ENCODE measurements at regions of chr1 and their contacts with region 1.

Region 1: DNA sequence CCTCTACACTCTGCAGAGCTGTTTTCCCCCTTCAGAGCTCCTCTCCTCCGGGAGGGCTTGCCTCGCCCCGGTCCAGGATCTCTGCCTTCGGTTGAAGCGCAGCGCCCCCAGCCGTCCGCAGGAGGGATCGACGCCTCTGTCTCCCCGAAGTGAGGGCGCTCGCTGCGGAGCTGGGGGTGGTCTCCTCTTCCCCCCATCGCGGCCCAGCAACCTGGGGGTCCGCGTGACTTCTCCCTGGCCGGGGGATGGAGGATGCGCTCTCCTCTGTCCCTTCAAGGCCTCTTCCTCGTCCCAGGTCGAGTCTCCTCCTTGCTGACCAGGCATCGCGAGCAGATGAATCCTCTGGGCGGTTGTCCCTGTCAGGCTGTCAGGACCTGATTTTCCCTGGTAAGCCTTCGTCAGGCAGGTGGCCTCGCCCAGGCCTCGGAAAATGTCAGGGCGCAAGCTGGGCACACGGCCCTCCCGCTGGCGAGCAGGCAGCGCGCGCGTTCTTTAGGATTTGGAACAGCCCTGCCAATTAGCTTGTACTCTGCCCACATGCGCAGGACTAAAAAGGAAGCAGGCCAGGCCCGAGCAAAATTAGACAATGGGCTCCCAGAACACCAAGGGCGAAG is 90.5 kb downstream of the EDEM3 start:
- DNase-seq: peak; percentile 92
- ATAC-seq: peak; percentile 96
- H3K4me3 Mint-ChIP-seq: peak overlapping the region; percentile 67
- H3K27ac Mint-ChIP-seq: no peak overlapping the region
- H3K4me1 Mint-ChIP-seq: peaks cover 34% of the 10 kb centered on the region
- H3K27me3 Mint-ChIP-seq: peaks cover 8% of the 10 kb centered on the region
- CTCF ChIP-seq: peak; percentile 89

Region 2: DNA sequence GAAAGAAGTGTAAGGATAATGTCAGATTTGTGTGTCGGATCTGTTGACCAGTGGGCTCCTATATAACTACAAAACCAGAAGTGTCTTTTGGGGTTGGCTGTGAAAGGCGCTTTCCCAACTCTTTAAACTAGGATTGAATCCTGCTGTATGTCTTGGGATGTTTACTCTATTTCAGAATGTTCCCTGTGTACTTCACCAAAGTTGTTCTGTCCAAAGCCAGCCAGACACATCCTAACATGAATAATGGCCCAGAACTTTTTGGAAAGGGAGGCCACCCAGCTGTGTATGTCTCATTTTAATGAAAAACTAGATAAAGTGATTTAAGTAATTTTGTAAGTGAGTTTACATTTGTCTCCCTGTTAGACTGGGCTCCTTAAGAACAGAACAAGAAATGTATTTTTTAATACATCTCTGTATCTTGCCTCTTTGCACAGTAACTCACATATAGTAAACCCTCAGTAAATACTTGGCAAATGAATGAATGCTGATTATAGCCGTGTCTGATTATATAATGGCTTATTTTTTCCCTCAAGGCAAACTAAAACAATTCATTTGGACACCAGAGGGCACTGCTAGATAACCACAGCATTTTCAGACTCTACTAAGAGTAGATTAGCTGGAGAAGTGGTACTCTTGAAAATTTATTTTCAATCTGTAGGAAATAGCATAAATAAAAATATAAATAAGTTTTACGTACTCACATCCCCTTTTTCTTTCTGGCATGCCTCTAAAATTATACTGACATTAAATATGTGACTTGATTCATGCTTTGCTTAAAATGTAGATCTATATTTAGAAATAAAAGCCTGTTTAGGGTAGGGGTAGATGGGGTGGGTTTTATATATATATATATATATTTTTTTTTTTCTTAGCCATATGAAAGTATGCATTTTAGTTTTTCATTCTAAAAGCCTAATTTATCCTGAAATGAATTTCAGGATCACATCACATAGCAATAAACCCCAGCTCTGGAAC is 588.8 kb before region 1 on chr1:
- CTCF ChIA-PET with region 1: interaction called, 16 read pairs
- POLR2A ChIA-PET with region 1: no interaction called
- DNase-seq: no peak
- ATAC-seq: 0 out of 2 replicates have a peak, but pooled peaks have one; percentile 34
- H3K4me3 Mint-ChIP-seq: no peak overlapping the region
- H3K27ac Mint-ChIP-seq: no peak overlapping the region
- H3K4me1 Mint-ChIP-seq: no peaks in the 10 kb centered on the region
- H3K27me3 Mint-ChIP-seq: no peaks in the 10 kb centered on the region
- CTCF ChIP-seq: peak; percentile 27; the same call in 1 of the 2 replicates

Region 3: GRCh38 chr1:184379111-184379946 is 284.8 kb before region 1 on chr1:
- CTCF ChIA-PET with region 1: interaction called, 42 read pairs
- POLR2A ChIA-PET with region 1: no interaction called
- DNase-seq: no peak
- ATAC-seq: peak; percentile 83
- H3K4me3 Mint-ChIP-seq: no peak overlapping the region
- H3K27ac Mint-ChIP-seq: no peak overlapping the region
- H3K4me1 Mint-ChIP-seq: peaks cover 28% of the 10 kb centered on the region
- H3K27me3 Mint-ChIP-seq: no peaks in the 10 kb centered on the region
- CTCF ChIP-seq: no peak

Region 4: GRCh38 chr1:184497959-184498723 is 166.0 kb before region 1 on chr1:
- CTCF ChIA-PET with region 1: interaction called, 25 read pairs
- POLR2A ChIA-PET with region 1: no interaction called
- DNase-seq: peak; percentile 72
- ATAC-seq: peak; percentile 97
- H3K4me3 Mint-ChIP-seq: no peak overlapping the region
- H3K27ac Mint-ChIP-seq: no peak overlapping the region
- H3K4me1 Mint-ChIP-seq: peaks cover 26% of the 10 kb centered on the region
- H3K27me3 Mint-ChIP-seq: no peaks in the 10 kb centered on the region
- CTCF ChIP-seq: no peak

Region 5: DNA sequence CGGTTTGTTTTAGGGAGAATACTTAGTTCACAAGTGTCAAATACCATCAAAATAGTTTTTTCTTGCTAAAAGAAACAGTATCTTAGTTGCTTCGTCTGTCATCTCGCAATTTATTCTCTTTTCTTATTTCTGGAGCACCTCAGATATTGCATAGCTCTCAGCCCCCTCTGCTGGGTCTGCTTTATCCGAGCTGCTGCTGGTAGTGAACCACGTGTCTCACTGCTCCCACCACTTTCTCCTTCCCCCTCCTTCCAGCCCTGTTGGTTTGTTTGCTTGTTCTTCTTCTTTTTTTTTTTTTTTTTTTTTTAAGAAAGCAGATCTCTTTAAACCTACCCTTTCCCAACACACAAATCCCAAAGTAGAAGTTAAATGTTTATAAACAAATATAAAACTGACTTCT is 80.3 kb before region 1 on chr1:
- CTCF ChIA-PET with region 1: interaction called, 15 read pairs
- POLR2A ChIA-PET with region 1: no interaction called
- DNase-seq: no peak
- ATAC-seq: peak; percentile 78
- H3K4me3 Mint-ChIP-seq: no peak overlapping the region
- H3K27ac Mint-ChIP-seq: peak overlapping the region; percentile 35; the same call in 1 of the 2 replicates
- H3K4me1 Mint-ChIP-seq: peaks cover 19% of the 10 kb centered on the region
- H3K27me3 Mint-ChIP-seq: no peaks in the 10 kb centered on the region; the same call in 1 of the 2 replicates
- CTCF ChIP-seq: no peak

Region 6: GRCh38 chr1:184626076-184627006 is 37.8 kb before region 1 on chr1:
- CTCF ChIA-PET with region 1: interaction called, 16 read pairs
- POLR2A ChIA-PET with region 1: no interaction called
- DNase-seq: no peak
- ATAC-seq: no peak
- H3K4me3 Mint-ChIP-seq: no peak overlapping the region
- H3K27ac Mint-ChIP-seq: peak overlapping the region; percentile 20
- H3K4me1 Mint-ChIP-seq: peaks cover 9% of the 10 kb centered on the region
- H3K27me3 Mint-ChIP-seq: no peaks in the 10 kb centered on the region
- CTCF ChIP-seq: no peak

Region 7: GRCh38 chr1:184686540-184686939 is 22.4 kb after region 1 on chr1:
- CTCF ChIA-PET with region 1: interaction called, 61 read pairs
- POLR2A ChIA-PET with region 1: no interaction called
- DNase-seq: no peak
- ATAC-seq: no peak
- H3K4me3 Mint-ChIP-seq: no peak overlapping the region
- H3K27ac Mint-ChIP-seq: no peak overlapping the region
- H3K4me1 Mint-ChIP-seq: 0 out of 2 replicates have a peak, but pooled peaks cover 5% of the 10 kb centered on the region
- H3K27me3 Mint-ChIP-seq: peaks cover under 1% of the 10 kb centered on the region; the same call in 1 of the 2 replicates
- CTCF ChIP-seq: no peak